Endothelial cell of umbilical vein (primary cell): ENCODE measurements at regions of chr1 and their contacts with region 1.

Region 1: DNA sequence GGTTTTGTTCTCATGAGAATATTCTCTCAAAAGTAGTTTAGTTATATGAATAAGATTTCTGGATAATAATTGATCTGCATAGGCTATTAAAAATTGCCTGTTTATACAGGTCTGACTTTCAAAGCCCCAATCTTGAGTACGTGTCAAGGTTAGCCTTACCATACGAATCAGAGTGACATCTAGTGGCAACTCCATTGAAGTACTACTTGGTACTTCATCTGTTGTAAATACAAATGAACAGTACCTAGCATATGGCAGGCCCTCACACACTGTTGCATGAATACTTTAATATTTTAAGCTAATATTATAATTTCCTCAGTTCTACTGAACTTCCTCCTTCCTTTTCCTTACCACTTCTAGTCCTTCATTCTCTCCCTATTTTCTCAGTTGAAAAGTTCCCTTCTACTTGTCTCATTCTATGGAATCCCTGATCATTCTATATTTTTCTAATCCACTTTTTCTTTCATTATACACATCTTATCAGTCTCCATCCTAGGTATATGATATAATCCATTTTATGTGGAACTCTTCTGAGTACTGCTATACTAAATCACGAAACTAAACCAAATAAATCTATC is 101.2 kb downstream of the AKT3 start:
- DNase-seq: peak; percentile 79
- H3K4me3 ChIP-seq: no peak overlapping the region
- H3K27ac ChIP-seq: no peak overlapping the region
- H3K4me1 ChIP-seq: peaks cover 4% of the 10 kb centered on the region
- H3K27me3 ChIP-seq: no peaks in the 10 kb centered on the region
- CTCF ChIP-seq: peak; percentile 55 to 58
- POLR2A ChIP-seq: no peak

Region 2: DNA sequence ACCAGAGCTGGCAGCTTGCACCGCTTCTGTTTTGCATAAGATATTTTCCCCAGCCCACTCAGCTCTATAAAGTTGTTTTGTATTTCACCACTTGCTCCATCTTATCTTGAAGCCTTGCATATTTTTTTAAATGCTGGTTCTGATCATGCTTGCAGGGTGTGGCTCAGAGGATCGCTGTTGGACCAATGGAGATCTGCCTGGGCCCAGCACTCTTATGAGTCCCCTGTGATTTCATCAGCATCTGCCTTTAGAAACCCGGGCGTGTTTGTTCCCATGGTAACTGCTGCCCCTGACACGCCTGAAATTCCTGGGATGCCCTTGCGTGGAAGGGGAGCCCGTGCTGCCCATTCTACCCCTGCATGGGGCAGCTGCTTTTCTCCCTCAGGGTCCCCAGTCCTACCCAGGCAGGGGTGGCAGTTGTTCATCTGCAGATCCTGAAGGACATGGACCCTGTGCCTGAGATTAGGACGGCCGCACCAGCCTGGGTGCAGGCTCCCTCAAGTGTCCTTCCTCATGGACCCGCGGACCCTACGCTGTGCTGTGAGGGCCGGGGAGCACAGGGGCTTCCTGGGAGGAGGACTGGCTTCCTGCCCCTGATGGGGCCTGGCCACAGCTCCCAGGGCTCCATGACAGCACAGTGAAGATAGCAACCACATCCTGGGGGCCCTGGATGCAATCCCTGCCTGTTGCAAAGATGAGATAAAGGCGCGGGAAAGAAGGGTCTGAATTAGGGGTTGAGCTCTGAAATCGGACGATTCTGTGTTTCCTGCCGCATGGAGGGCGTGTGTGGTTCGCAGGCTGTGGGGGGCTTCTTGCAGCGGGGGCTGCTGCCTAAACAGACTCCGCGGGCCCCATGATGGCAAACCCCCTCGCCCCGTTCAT is 266.4 kb before region 1 on chr1:
- CTCF ChIA-PET with region 1: no interaction called
- POLR2A ChIA-PET with region 1: no interaction called
- dilution Hi-C with region 1: no loop called
- intact Hi-C with region 1: loop called (anchors 1 kb)
- DNase-seq: no peak
- H3K4me3 ChIP-seq: peak overlapping the region in 1 of 3 experiments; percentile 8
- H3K27ac ChIP-seq: no peak overlapping the region
- H3K4me1 ChIP-seq: peaks cover 2% of the 10 kb centered on the region
- H3K27me3 ChIP-seq: no peaks in the 10 kb centered on the region
- CTCF ChIP-seq: no peak
- POLR2A ChIP-seq: no peak

Region 3: GRCh38 chr1:243525085-243525487 is 223.7 kb before region 1 on chr1:
- CTCF ChIA-PET with region 1: no interaction called
- POLR2A ChIA-PET with region 1: no interaction called
- dilution Hi-C with region 1: no loop called
- intact Hi-C with region 1: loop called (anchors 10 kb)
- DNase-seq: peak; percentile 91
- H3K4me3 ChIP-seq: no peak overlapping the region
- H3K27ac ChIP-seq: peak overlapping the region; percentile 95
- H3K4me1 ChIP-seq: peaks cover 9% of the 10 kb centered on the region
- H3K27me3 ChIP-seq: no peaks in the 10 kb centered on the region
- CTCF ChIP-seq: no peak
- POLR2A ChIP-seq: no peak

Region 4: DNA sequence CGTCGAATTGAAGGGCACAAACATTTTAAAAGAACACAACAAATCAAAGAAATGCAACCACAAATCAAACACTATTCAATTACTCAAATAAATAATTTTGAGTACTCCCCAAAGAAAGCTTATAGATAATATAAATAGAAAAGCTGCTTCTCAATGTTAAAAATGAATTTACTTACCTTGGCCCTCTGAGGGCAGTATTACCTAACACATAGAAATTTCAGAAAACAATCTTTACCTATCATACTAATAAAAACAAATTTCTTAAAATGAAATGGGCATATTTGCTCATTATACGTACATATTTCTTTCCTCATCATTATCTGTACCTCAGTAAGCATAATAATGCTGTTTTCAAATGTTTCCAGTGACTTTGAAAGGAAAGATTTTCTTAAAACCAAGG is 40.6 kb before region 1 on chr1:
- CTCF ChIA-PET with region 1: interaction called, 8 read pairs
- POLR2A ChIA-PET with region 1: no interaction called
- dilution Hi-C with region 1: no loop called
- intact Hi-C with region 1: loop called (anchors 1 kb)
- DNase-seq: peak; percentile 40
- H3K4me3 ChIP-seq: no peak overlapping the region
- H3K27ac ChIP-seq: no peak overlapping the region
- H3K4me1 ChIP-seq: peaks cover 2% of the 10 kb centered on the region
- H3K27me3 ChIP-seq: no peaks in the 10 kb centered on the region
- CTCF ChIP-seq: no peak
- POLR2A ChIP-seq: no peak